Left ventricle myocardium superior (tissue), 1 donor: ENCODE measurements at regions of chr7 and their contacts with region 1.

Region 1: GRCh38 chr7:44240983-44241510 is 40.3 kb downstream of the YKT6 start:
- DNase-seq: peak; percentile 76
- ATAC-seq: peak; percentile 86

Region 2: DNA sequence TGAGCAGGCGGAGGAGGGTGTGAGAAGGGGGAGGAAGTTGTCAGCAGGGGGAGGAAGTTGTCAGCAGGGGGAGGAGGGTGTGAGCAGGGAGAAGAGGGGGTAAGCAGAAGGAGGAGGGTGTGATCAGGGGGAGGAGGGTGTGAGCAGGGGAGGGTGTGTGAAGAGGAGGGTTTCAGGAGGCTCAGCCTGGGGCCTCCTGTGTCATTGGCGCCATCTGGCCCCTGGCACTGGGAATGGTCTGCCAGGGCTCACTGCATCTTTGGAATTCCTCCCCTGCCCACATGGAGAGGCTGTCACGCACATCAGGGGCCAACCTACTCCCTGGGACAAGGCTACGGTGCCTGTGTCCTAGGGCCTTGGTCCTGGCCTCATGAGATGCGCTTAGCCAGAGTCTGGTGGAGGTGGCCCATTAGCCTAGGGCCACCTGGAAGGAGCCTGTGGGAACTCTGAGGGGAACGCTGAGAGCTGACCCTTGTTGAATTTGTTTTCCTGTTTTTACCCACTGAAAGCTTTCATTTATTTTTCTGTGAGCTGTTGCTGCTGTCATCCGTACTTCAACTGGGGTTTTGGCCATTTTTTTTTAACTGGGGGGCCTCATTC is 66.4 kb after region 1 on chr7:
- intact Hi-C with region 1: loop called (anchors 5 kb)
- DNase-seq: peak; percentile 72
- ATAC-seq: peak; percentile 74

Region 3: GRCh38 chr7:44477063-44477830 is 236.2 kb after region 1 on chr7:
- intact Hi-C with region 1: loop called (anchors 5 kb)
- DNase-seq: peak; percentile 43
- ATAC-seq: peak; percentile 88